GM10248 (cell line): ENCODE measurements at regions of chr12 and their contacts with region 1.

Region 1: GRCh38 chr12:4276524-4277204 is 3.1 kb downstream of the CCND2 start:
- DNase-seq: peak; percentile 78
- CTCF ChIP-seq: peak; percentile 85

Region 2: GRCh38 chr12:3964439-3964838 is 312.2 kb before region 1 on chr12:
- CTCF ChIA-PET with region 1: interaction called, 37 read pairs
- POLR2A ChIA-PET with region 1: no interaction called
- DNase-seq: peak; percentile 44
- CTCF ChIP-seq: peak; percentile 63

Region 3: GRCh38 chr12:4056910-4057845 is 219.5 kb before region 1 on chr12:
- CTCF ChIA-PET with region 1: interaction called, 13 read pairs
- POLR2A ChIA-PET with region 1: no interaction called
- DNase-seq: no peak
- CTCF ChIP-seq: no peak

Region 4: GRCh38 chr12:4135919-4136605 is 140.6 kb before region 1 on chr12:
- CTCF ChIA-PET with region 1: interaction called, 16 read pairs
- POLR2A ChIA-PET with region 1: no interaction called
- DNase-seq: peak; percentile 84
- CTCF ChIP-seq: no peak

Region 5: DNA sequence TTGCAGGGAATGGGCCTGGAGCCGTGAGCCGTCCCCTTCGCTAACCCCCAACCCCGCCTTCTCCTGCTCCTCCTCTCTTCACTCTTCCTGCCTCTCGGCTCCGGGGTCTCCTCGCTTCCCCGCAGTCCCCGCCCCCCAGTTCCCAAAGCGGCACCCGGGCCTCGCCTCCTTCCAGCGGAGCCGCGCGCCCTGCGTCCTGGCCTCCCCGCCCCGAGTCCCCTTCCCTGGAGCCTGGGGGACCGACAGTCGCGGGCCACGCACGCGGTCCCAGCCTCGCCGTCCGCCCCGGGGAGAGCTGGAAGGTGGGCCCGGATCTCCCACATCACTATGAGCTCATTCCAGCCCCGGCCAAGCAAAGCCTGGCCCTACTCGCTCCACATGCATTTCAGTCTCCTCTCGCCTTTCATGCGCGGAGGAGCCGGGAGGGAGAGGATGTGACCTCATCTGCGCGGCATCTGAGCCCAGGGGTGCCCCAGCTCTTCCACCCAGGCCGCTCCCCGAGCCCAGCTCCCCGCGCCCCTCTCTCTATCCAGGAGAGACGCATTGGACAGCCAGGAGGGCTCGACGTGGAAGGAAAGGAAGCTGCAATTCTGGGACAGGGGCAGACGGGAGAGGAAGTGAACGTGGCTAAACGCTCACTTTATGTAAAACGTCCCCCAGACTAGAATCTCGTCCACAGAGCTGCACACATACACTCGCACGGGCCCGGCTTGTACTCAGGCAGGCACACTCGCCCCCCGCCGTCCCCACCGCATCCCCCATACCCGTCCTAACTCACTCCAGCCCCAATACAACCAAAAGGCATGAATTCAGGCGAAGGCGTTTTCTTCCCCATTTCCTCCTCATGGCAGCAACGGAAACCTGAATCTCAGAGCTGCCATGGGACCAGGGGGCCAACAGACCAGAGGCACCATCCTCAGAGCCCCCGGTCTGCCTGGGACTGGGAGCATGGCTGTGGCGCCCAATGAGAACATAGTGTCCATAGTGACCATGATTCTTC is 111.8 kb before region 1 on chr12:
- CTCF ChIA-PET with region 1: interaction called, 12 read pairs
- POLR2A ChIA-PET with region 1: no interaction called
- DNase-seq: peak; percentile 76
- CTCF ChIP-seq: no peak

Region 6: GRCh38 chr12:4293299-4293965 is 16.8 kb after region 1 on chr12:
- CTCF ChIA-PET with region 1: interaction called, 63 read pairs
- POLR2A ChIA-PET with region 1: interaction called, 5 read pairs
- DNase-seq: no peak
- CTCF ChIP-seq: no peak

Region 7: DNA sequence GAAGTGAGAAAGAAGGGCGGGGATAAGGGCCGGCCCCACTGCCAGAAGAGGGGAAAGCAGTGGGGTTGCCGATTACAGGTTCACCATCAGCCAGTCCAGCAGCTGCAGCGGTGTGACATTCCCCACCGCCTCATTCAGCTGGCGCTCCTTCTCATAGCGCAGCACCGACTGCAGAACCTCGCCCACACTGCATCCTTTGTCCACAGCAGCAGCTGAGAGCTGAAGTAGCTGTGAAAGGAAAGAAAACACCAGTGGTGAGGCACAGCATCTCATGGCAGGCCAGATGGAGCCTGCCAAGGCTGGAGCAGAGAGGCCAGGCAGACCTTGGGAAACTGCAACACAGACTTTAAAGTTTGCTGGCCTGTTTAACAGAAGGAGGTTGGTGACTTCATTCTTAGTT is 339.0 kb after region 1 on chr12:
- CTCF ChIA-PET with region 1: no interaction called
- POLR2A ChIA-PET with region 1: no interaction called
- DNase-seq: no peak
- CTCF ChIP-seq: no peak